ENCODE measurements at regions of chr11 and their contacts with region 1.

Region 1: GRCh38 chr11:112280268-112281126 is 19.8 kb upstream of the PLET1 start:
- DNase-seq: peak; percentile 66
- H3K4me3 ChIP-seq: peak overlapping the region; percentile 0 to 44 (median 24)
- H3K27ac ChIP-seq: peak overlapping the region in 3 of 4 donors; percentile 40 to 54 (median 52)
- H3K4me1 ChIP-seq: peaks cover 0 to 15% (median 8%) of the 10 kb centered on the region in 4 donors
- H3K27me3 ChIP-seq: no peaks in the 10 kb centered on the region
- CTCF ChIP-seq: peak; percentile 51 to 86 (median 72)
- EP300 ChIP-seq: no peak
- POLR2A ChIP-seq: no peak

Region 2: GRCh38 chr11:111944651-111945051 is 335.8 kb before region 1 on chr11:
- in situ Hi-C with region 1: no loop called
- intact Hi-C with region 1: no loop called
- DNase-seq: no peak
- H3K4me3 ChIP-seq: no peak overlapping the region
- H3K27ac ChIP-seq: peak overlapping the region; percentile 30 to 50 (median 38)
- H3K4me1 ChIP-seq: peaks cover 0 to 10% (median under 1%) of the 10 kb centered on the region in 4 donors
- H3K27me3 ChIP-seq: no peaks in the 10 kb centered on the region
- CTCF ChIP-seq: no peak
- EP300 ChIP-seq: no peak
- POLR2A ChIP-seq: no peak

Region 3: DNA sequence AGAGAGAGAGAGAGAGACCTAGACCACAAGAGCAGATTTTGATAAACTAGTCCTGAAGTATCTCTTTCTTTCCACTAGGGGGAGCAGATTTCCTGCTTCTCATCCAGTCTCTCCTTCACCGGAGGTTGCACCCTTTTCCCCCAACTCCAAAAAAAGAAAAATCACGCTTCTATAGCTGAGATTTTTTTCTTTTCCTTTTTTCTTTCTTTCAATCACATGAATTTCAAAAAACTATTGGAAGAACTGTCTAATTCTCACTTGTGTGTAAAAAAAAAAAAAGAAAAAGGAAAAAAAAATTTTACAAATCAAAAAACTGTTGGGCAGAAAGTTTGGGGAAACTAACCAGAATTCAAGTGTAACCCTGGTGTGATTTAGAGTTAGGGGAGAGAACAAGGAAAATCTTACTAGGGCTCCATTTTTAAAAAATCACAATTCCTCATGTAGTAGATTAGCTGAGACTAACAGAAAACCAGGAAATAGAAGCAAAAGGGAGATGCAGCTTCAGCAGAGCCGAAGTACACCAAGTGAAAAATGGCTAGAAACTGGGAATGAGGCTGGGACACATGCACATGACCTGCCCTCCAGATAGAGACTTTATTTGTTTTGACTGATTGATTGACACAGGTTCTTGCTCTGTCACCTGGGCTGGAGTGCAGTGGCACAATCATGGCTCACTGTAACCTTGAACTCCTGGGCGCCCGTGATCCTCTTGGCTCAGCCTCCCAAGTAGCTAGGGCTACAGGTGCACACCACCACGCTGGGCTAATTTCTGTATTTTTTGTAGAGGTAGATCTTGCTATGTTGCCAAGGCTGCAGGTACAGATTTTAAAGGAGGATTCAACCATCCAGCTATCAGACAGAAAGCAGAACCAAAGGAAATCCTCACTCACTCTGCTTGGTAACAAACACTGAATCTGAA is 166.7 kb before region 1 on chr11:
- in situ Hi-C with region 1: loop called in 1 of 4 experiments (anchors 25 kb)
- intact Hi-C with region 1: no loop called
- DNase-seq: no peak
- H3K4me3 ChIP-seq: no peak overlapping the region
- H3K27ac ChIP-seq: no peak overlapping the region
- H3K4me1 ChIP-seq: peaks cover 0 to 7% (median 0%) of the 10 kb centered on the region in 4 donors
- H3K27me3 ChIP-seq: no peaks in the 10 kb centered on the region
- CTCF ChIP-seq: peak; percentile 68 to 76 (median 69)
- EP300 ChIP-seq: no peak
- POLR2A ChIP-seq: no peak

Region 4: GRCh38 chr11:112185883-112186282 is 94.6 kb before region 1 on chr11:
- in situ Hi-C with region 1: no loop called
- intact Hi-C with region 1: no loop called
- DNase-seq: no peak
- H3K4me3 ChIP-seq: no peak overlapping the region
- H3K27ac ChIP-seq: no peak overlapping the region
- H3K4me1 ChIP-seq: no peaks in the 10 kb centered on the region
- H3K27me3 ChIP-seq: no peaks in the 10 kb centered on the region
- CTCF ChIP-seq: no peak
- EP300 ChIP-seq: no peak
- POLR2A ChIP-seq: no peak

Region 5: DNA sequence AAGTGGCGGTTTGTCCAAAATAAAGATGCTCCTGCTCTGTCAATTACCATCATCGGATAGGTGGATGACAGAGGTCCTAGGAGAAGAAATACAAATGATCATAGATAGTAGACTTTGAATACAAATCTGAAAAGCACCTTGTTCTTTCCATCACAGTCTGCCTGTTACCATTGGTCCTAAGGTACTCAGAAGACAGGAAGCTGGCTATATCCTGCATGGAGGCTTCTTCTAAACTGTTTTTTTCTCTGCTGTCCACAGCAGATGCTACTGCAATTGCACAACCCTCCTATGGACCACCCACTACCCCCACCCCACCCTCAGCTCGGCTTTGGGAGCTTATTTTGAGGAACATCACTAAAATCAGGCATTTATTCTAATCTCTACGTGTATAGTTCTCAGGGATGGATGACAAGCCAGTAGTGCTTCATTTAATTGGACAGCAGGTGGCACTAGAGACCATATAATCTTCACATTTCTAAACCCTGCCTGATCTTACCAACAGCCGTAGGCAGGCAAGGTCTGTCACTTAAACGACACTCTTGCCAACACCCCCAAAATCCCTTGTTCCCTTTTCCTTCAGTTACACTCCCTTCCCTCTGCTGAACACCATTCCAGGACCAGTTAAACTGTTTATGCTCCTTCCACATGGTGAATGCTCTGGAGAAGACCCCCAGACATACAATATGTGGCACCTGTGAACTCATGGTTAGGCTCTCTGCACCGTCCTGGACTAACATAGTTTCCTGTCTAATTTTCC is 60.8 kb before region 1 on chr11:
- in situ Hi-C with region 1: loop called in 3 of 4 experiments (anchors 5 kb)
- intact Hi-C with region 1: loop called (anchors 1 kb)
- DNase-seq: peak; percentile 20
- H3K4me3 ChIP-seq: no peak overlapping the region
- H3K27ac ChIP-seq: no peak overlapping the region
- H3K4me1 ChIP-seq: peaks cover 0 to 12% (median 3%) of the 10 kb centered on the region in 4 donors
- H3K27me3 ChIP-seq: no peaks in the 10 kb centered on the region
- CTCF ChIP-seq: peak; percentile 72 to 89 (median 82)
- EP300 ChIP-seq: no peak
- POLR2A ChIP-seq: no peak

Region 6: GRCh38 chr11:112555491-112556364 is 275.2 kb after region 1 on chr11:
- in situ Hi-C with region 1: loop called in 3 of 4 experiments (anchors 10 to 25 kb)
- intact Hi-C with region 1: no loop called
- DNase-seq: peak; percentile 67
- H3K4me3 ChIP-seq: no peak overlapping the region
- H3K27ac ChIP-seq: no peak overlapping the region
- H3K4me1 ChIP-seq: no peaks in the 10 kb centered on the region
- H3K27me3 ChIP-seq: no peaks in the 10 kb centered on the region
- CTCF ChIP-seq: peak; percentile 41 to 68 (median 64)
- EP300 ChIP-seq: no peak
- POLR2A ChIP-seq: no peak

Measured in transverse colon (tissue), 4 donors.